ENCODE measurements at regions of chr19 and their contacts with region 1.

Region 1: DNA sequence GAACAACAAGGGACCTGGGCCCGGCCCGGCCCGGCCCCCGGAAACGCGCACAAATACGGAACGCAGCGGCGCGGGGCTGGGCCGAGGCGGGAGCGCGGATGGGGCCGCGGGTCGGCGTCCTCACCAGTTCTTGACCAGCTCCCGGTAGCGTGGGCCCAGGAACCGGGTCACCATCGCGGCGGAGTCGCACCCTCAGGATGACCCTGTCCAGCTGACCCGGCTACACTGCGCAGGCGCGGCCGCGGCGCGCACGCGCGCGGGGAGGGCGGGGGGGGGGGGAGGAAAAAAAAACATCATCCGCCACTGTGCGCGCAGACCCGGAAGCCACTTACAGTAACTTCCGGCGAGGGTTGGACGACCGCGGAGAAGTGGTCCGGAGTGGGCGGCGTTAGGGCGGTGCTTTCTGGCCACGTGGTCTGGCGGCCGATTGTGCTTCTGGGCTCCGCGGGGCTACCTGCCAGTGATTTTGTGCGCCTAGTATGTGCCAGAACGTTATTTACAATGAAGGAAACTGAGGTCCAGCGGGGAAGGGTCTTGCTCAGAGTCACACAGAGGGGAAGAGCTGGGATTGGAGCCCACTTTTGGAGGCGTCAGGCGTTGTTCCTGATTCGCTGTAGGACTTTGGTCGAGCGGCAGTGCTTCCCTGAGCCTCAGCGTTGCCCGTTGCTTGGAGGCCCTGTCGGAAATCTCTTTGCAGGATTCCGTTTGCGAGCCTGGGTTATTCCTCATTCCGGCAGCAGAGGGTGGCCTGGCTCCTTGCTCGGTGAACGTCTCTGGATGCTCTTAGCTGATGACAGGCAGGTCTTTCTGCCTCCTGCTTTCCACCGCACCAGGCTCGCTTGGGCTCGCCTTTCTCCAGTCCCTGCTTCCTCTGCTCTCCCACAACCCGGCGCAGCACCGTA is at the start of gene UQCR11:
- DNase-seq: peak; percentile 85
- H3K4me3 ChIP-seq: peak within 1 kb of the TSS; percentile 94
- CTCF ChIP-seq: peak; percentile 69

Region 2: DNA sequence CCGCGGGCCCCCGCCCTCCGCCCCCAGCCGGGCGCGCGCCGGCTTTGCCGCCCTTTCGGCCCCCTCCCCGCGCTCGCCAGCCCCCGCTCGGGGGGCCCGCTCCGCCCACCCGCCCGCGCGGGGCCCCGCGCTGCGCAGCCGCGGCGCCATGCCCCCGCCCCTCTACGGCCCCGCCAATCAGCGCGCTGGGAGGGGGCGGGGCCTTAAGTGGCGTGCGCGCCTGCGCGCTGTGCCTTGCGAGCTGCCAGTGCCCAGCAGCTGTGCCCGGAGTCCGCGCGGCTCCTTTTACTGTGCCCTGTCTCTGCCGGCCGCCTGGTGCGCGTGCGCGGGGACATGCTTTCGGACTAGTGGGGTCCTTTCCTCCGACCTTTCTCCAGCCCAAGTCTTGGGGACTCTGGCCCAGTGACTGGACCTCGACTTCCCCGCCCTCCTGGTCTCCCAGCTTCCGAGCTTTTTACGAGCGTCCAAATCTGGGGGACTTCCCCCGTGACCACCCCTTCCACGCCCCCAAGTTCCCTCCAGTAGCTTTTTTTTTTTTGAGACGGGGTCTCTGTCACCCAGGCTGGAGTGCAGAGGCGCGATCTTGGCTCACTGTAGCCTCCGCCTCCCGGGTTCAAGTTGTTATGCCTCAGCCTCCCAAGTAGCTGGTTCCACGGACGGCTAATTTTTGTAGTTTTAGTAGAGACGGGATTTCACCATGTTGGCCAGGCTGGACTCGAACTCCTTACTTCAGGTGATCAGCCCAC is 12.6 kb before region 1 on chr19 and contains the start of gene MBD3:
- CTCF ChIA-PET with region 1: interaction called, 6 read pairs
- POLR2A ChIA-PET with region 1: interaction called, 11 read pairs
- DNase-seq: peak; percentile 52
- H3K4me3 ChIP-seq: peak within 1 kb of the TSS; percentile 84
- CTCF ChIP-seq: no peak

Measured in AG04449 (cell line).